ENCODE measurements at regions of chr1 and their contacts with region 1.

Region 1: DNA sequence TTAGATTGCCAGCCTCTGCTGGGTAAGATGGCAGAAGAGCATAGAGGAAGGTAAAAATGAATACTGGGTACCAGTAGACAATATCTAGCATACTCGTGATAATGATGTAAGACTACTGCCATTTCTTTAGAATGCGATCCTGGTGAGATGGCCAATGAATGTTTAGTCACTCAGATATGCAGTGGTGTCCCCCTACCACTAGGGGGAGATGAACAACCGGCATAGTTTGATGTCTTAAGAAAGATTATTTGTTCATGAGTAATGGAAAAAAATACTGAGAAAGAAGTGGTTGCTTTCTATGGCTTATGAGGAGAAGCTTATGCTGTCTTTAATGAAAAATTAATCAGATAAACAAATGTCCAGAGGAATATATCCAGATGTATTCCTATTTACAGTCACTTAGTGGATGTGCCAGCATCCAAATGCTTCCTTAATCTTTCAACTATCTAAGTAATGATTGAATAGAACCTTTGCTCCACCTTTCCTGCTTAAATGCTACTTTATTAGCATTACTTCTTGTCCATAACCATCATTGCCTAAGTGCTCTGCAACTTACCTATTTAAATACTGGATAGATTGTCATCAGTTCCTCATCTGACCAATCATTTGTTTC is 256.6 kb downstream of the ST6GALNAC3 start:
- DNase-seq: peak; percentile 39
- H3K4me3 ChIP-seq: no peak overlapping the region
- H3K27ac ChIP-seq: no peak overlapping the region
- H3K4me1 ChIP-seq: no peaks in the 10 kb centered on the region
- H3K27me3 ChIP-seq: no peaks in the 10 kb centered on the region
- CTCF ChIP-seq: peak; percentile 94

Region 2: GRCh38 chr1:75991497-75992114 is 339.5 kb before region 1 on chr1:
- intact Hi-C with region 1: loop called (anchors 10 kb)
- DNase-seq: peak; percentile 92
- H3K4me3 ChIP-seq: no peak overlapping the region
- H3K27ac ChIP-seq: no peak overlapping the region
- H3K4me1 ChIP-seq: no peaks in the 10 kb centered on the region
- H3K27me3 ChIP-seq: no peaks in the 10 kb centered on the region
- CTCF ChIP-seq: peak; percentile 71

Region 3: DNA sequence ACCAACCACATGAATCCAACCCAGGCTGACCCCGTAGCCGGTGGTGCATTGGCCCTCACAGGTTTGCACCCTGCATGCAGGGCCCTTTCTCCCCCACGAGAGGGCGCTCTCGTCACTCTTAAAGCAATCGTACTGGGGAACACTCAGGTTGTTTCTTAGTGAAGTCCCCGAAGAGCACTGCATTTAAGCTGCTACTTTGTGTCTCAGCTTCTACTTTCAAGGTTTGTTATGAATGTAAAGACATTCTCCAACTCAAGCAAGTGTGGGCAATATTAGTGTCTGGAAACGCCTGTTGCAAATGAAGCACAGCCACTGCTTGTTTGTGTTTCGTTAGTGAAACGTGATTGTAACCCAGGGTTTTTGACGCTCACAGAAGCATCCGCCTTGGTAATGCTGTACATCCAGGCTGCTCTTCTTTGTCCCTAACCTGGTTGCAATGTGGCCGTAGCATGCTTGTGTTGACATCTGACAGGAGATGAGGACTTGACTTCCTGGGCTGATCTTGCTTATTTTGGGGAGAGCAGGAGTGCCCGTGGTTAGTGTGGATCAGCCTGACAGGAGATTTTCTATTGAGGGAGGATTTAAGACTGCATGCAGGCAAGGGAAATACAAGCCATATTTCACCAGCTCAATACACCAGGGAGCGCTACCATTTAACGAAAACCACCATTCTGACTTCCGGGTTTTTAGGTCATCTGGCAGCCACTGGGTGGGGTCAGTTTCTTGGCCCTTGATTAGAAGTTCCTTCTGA is 176.7 kb before region 1 on chr1:
- intact Hi-C with region 1: loop called (anchors 10 kb)
- DNase-seq: peak; percentile 84
- H3K4me3 ChIP-seq: peak overlapping the region; percentile 22
- H3K27ac ChIP-seq: peak overlapping the region; percentile 14
- H3K4me1 ChIP-seq: no peaks in the 10 kb centered on the region
- H3K27me3 ChIP-seq: no peaks in the 10 kb centered on the region
- CTCF ChIP-seq: peak; percentile 100

Region 4: DNA sequence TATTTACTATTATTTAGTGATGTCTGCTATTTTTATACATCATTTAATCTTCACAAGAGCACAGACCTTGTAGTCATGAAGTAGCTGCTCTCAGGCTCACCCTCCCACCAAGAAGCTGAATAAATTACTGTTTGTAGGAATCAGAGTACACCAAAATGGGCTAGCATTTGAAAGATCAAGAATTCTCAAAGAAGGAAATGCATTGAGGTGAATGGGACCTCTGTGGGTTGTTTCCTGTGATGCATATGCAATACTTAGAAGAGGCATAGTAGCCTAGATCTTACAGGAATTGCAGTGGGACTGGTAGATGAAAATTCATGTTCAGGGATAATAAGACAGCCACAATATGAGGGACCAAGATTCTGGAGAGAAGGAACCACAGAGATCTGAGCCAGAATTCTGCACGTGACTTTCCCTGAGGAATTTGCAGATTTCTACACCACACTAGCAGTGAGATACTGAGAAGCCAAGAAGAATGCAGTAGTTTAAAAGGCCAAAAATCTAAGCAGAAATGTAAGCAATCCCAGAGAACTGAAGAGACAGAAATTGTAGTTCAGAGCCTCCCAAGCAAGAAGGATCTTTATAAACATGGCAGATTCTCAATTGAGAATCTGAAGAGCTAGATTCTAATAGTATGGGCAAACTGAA is 50.5 kb after region 1 on chr1:
- intact Hi-C with region 1: no loop called
- DNase-seq: no peak
- H3K4me3 ChIP-seq: no peak overlapping the region
- H3K27ac ChIP-seq: no peak overlapping the region
- H3K4me1 ChIP-seq: no peaks in the 10 kb centered on the region
- H3K27me3 ChIP-seq: no peaks in the 10 kb centered on the region
- CTCF ChIP-seq: no peak

Region 5: DNA sequence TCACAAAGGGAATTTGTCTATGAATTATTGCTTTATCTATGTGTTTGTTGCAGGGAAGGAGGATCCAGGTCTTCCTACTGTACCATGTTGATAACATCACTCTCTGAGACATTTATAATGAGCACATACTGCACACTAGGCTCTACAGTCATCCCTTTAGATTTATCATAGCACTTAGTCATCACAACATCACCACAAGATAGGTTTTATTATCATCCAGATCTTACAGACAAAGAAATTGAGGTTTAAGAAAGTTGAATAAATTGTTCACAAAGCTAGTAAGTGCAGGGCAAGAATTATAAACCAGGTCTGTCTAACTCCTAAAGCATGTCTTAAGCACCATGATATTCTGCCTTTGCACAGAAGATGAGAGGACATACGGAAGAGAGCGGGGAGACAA is 415.1 kb after region 1 on chr1:
- intact Hi-C with region 1: loop called (anchors 10 kb)
- DNase-seq: no peak
- H3K4me3 ChIP-seq: no peak overlapping the region
- H3K27ac ChIP-seq: no peak overlapping the region
- H3K4me1 ChIP-seq: no peaks in the 10 kb centered on the region
- H3K27me3 ChIP-seq: no peaks in the 10 kb centered on the region
- CTCF ChIP-seq: no peak

Region 6: DNA sequence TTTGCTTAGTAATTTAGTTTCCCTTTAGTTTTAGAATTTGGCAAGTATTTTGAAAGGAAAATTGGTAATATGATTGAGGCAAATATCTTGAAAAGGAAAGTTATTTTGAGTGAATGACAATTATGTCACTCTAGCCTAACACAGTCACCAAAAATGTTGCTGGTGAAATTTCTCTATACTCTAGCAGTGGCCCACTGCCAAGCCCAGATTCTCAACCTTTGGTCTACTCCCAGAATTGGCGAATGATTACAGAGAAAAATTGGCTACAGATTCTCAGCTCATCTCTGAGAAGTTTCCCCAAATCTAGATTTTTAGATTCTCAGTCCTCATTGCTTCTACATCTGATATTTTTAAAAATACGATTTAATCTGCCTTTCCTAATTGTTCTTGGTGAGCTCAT is 803.3 kb after region 1 on chr1:
- intact Hi-C with region 1: loop called (anchors 10 kb)
- DNase-seq: no peak
- H3K4me3 ChIP-seq: no peak overlapping the region
- H3K27ac ChIP-seq: no peak overlapping the region
- H3K4me1 ChIP-seq: no peaks in the 10 kb centered on the region
- H3K27me3 ChIP-seq: no peaks in the 10 kb centered on the region
- CTCF ChIP-seq: no peak